ENCODE measurements at regions of chr16 and their contacts with region 1.

Region 1: DNA sequence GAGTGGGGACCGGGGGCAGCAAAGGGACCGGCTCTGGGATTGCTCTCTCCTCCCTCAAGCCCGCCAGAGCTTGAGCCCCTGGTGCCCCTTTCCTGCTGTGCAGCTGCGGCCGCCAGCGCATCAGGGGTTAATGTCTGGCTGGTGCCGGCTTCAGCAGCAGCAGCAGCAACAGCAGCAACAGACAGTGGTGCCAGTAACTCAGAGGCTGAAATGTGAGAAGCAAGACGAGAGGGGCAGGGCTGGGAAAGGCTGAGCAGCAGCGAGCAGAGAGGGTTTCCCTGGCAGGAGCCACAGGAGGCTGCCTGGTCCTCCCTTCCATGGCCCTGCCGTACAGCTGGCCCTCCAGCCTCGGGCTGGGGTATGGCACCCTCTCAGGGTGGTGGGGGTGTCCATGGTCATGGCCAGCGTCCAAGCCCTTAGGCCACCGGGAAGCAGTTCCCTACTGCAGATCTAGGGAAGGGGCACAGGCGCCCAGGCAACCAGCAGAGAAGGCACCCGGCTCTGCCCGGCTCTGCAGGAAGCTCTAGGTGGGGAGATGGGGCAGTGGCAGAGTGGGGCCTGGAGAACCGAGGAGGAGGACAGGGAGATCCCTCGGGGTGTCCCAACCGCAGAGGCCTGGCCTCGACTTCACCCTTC is 21.1 kb upstream of the TFAP4 start:
- DNase-seq: peak in 1 of 2 experiments; percentile 82
- H3K4me3 ChIP-seq: peak overlapping the region in 3 of 4 experiments; percentile 24 to 50 (median 34); a peak in 6 of 8 replicates
- H3K27ac ChIP-seq: peak overlapping the region; percentile 67
- H3K4me1 ChIP-seq: peaks cover 7 to 23% (median 15%) of the 10 kb centered on the region in 4 experiments
- H3K27me3 ChIP-seq: no peaks in the 10 kb centered on the region
- CTCF ChIP-seq: peak in 1 of 3 experiments; percentile 1; a peak in 1 of 4 replicates
- EP300 ChIP-seq: peak in 1 of 2 experiments; percentile 65; a peak in 1 of 3 replicates
- POLR2A ChIP-seq: peak in 1 of 2 experiments; percentile 26; a peak in 1 of 3 replicates
- RAD21 ChIP-seq: peak in 1 of 2 experiments; percentile 25; a peak in 1 of 4 replicates

Region 2: GRCh38 chr16:4240624-4241023 is 53.3 kb before region 1 on chr16:
- CTCF ChIA-PET with region 1: no interaction called
- POLR2A ChIA-PET with region 1: no interaction called
- DNase-seq: no peak
- H3K4me3 ChIP-seq: no peak overlapping the region
- H3K27ac ChIP-seq: no peak overlapping the region
- H3K4me1 ChIP-seq: peaks cover 0 to 7% (median 2%) of the 10 kb centered on the region in 4 experiments; a peak in 6 of 7 replicates
- H3K27me3 ChIP-seq: no peaks in the 10 kb centered on the region
- CTCF ChIP-seq: no peak
- EP300 ChIP-seq: no peak
- POLR2A ChIP-seq: no peak
- RAD21 ChIP-seq: no peak

Region 3: GRCh38 chr16:4323845-4324478 is 30.0 kb after region 1 on chr16:
- CTCF ChIA-PET with region 1: interaction called, 300 read pairs
- POLR2A ChIA-PET with region 1: interaction called, 12 read pairs
- DNase-seq: peak in 1 of 2 experiments; percentile 77
- H3K4me3 ChIP-seq: peak overlapping the region in 1 of 4 experiments; percentile 11; a peak in 1 of 8 replicates
- H3K27ac ChIP-seq: no peak overlapping the region
- H3K4me1 ChIP-seq: peaks cover 5 to 38% (median 31%) of the 10 kb centered on the region in 4 experiments
- H3K27me3 ChIP-seq: no peaks in the 10 kb centered on the region
- CTCF ChIP-seq: no peak
- EP300 ChIP-seq: no peak
- POLR2A ChIP-seq: no peak
- RAD21 ChIP-seq: no peak